Lower leg skin (tissue), 4 donors: ENCODE measurements at regions of chr17 and their contacts with region 1.

Region 1: DNA sequence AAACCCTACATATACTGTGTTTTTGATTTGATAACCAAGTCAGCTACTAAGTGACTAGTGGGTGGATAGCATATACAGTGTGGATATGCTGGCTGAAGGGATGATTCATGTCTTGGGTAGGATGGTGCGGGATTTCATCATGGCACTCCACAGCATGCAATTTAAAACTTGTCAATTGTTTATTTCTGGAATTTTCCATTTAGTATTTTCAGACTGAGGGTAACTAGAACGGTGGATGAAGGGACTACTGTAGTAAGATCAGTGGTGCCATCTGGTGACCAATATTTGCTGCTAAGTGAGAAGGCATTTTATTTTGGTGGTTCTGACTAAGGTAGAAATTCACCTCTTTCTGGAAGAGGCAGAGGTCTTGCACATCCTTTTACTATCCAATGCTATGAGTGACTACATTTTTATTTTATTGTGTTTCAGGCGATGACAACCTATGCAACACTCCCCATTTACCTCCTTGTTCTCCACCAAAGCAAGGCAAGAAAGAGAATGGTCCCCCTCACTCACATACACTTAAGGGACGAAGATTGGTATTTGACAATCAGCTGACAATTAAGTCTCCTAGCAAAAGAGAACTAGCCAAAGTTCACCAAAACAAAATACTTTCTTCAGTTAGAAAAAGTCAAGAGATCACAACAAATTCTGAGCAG is 3.1 kb downstream of the CDC6 start:
- DNase-seq: peak in 1 of 2 donors; percentile 68
- H3K4me3 ChIP-seq: no peak overlapping the region
- CTCF ChIP-seq: no peak
- POLR2A ChIP-seq: no peak

Region 2: DNA sequence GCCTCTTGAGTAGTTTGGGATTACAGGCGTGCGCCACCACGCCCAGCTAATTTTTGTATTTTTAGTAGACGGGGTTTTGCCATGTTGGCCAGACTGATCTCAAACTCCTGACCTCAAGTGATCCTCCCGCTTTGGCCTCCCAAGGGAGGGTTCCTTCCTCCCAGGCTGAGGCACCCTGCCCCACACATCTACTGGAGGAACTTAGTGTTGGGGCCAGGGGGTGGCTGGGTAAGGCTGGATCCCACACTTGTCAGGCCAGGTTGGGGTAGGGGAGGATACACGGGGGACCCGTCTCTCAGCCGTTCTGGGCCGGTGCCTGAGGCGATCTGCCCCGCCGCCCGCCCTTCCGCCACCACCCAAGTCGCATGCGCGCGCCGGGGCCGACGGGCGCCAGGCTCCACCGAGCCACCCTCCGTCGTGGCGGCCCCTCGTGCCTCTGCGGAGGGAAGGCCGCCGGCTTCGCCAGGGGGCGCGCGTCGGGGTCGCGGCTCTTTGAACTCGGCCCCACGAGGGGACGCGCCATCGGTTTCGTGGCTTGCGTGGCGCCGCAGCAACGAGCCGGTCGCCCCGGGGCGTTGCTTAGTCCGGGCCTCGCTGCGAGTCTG is 537.1 kb before region 1 on chr17:
- intact Hi-C with region 1: no loop called
- DNase-seq: peak in 1 of 2 donors; percentile 90
- H3K4me3 ChIP-seq: peak overlapping the region; percentile 30
- CTCF ChIP-seq: no peak
- POLR2A ChIP-seq: no peak

Region 3: DNA sequence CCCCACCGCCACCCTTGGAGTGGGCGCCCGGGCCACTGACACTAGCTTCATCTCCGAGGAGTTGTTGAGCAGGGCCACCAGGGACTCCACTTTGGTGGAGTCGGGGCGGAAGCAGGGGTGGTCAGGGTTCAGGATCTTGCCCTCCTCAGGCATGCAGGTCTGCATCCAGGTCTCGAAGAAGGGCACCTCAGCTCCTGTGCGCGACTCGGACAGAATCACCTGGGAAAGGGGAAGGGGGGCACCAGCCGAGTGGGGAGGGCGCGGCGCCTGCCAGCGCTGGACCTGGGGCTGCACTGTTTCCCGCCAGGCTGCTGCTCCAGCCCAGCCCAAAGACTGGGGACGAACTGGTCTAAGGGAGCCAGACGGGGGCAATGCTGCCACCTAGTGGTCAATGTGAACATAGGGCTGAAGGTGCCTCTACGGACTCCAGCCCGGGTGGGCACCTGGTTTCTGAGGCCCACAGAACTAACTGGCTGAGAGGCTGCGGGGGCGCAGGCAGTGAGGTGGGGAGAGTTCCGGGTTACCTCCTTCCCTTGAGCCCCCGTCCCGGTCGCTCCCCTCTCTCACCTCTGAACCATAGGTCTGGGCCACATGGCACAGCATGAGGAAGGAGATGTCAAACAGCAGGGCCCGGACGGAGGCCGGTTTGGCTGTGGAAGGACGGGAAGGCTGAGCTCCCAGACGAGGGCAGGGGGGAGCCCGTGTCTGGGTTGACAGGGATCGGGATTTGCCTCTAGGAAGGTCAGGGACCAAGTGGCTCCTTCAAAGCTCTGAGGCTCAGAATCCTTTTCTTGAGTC is 263.7 kb before region 1 on chr17:
- intact Hi-C with region 1: loop called (anchors 10 kb)
- DNase-seq: peak; percentile 75 to 96
- H3K4me3 ChIP-seq: no peak overlapping the region
- CTCF ChIP-seq: peak in 1 of 3 donors; percentile 57
- POLR2A ChIP-seq: no peak

Region 4: DNA sequence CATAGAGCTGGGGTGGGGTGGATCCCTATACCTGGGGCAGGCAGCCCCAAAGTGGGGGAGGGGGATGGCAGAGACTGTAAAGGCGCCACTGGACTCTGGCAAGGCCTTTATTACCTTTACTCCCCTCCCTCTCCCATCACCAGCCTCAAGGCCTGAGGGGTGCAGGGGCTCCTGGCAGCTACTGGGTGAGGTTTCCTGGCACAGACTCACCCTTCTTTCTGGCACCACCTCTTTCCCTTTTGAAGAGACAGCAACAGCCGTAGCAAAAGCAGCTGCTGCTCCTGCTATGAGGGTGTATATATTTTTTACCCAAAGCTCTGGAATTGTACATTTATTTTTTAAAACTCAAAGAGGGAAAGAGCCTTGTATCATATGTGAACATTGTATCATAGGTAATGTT is 95.9 kb before region 1 on chr17:
- intact Hi-C with region 1: loop called (anchors 5 kb)
- DNase-seq: no peak
- H3K4me3 ChIP-seq: no peak overlapping the region
- CTCF ChIP-seq: no peak
- POLR2A ChIP-seq: no peak